Body of pancreas (tissue), 4 donors: ENCODE measurements at regions of chr4 and their contacts with region 1.

Region 1: GRCh38 chr4:114688059-114688458 is 89.5 kb downstream of the UGT8 start:
- DNase-seq: peak in 1 of 4 donors; percentile 10
- ATAC-seq: no peak
- H3K4me3 ChIP-seq: no peak overlapping the region
- H3K27ac ChIP-seq: no peak overlapping the region
- H3K4me1 ChIP-seq: peaks cover 9% of the 10 kb centered on the region
- H3K27me3 ChIP-seq: no peaks in the 10 kb centered on the region
- CTCF ChIP-seq: no peak
- POLR2A ChIP-seq: no peak

Region 2: DNA sequence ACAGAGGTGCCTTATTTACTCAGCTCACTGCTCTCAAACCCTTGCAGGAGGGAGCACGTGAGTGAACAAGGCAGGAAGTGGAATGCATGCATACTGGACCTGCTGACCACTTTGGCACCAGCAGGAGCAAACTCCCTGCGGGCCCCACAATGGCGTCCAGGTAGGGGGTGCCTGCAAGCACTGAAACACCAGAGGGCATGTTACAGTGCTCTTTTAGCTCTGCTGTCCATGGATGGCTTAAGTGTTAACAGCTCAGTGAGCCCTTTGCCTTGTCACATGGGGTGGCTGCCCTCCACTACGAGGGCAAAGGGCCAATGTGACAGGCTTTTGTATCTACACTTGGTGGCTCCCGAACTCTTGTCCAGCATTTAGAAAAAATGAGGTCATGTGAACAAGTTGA is 289.0 kb before region 1 on chr4:
- intact Hi-C with region 1: loop called (anchors 10 kb)
- DNase-seq: no peak
- ATAC-seq: no peak
- H3K4me3 ChIP-seq: no peak overlapping the region
- H3K27ac ChIP-seq: no peak overlapping the region
- H3K4me1 ChIP-seq: no peaks in the 10 kb centered on the region
- H3K27me3 ChIP-seq: no peaks in the 10 kb centered on the region
- CTCF ChIP-seq: no peak
- POLR2A ChIP-seq: no peak

Region 3: GRCh38 chr4:114890773-114891172 is 202.7 kb after region 1 on chr4:
- intact Hi-C with region 1: no loop called
- DNase-seq: no peak
- ATAC-seq: no peak
- H3K4me3 ChIP-seq: no peak overlapping the region
- H3K27ac ChIP-seq: no peak overlapping the region
- H3K4me1 ChIP-seq: no peaks in the 10 kb centered on the region
- H3K27me3 ChIP-seq: no peaks in the 10 kb centered on the region
- CTCF ChIP-seq: no peak
- POLR2A ChIP-seq: no peak

Region 4: GRCh38 chr4:114924311-114924710 is 236.3 kb after region 1 on chr4:
- intact Hi-C with region 1: no loop called
- DNase-seq: no peak
- ATAC-seq: no peak
- H3K4me3 ChIP-seq: no peak overlapping the region
- H3K27ac ChIP-seq: no peak overlapping the region
- H3K4me1 ChIP-seq: peaks cover 5% of the 10 kb centered on the region
- H3K27me3 ChIP-seq: no peaks in the 10 kb centered on the region
- CTCF ChIP-seq: no peak
- POLR2A ChIP-seq: no peak